ENCODE measurements at regions of chr17 and their contacts with region 1.

Region 1: GRCh38 chr17:77164483-77165091 is 23.8 kb downstream of the SEC14L1 start:
- DNase-seq: no peak
- H3K4me3 ChIP-seq: no peak overlapping the region
- H3K4me3 Mint-ChIP-seq: no peak overlapping the region
- H3K27ac Mint-ChIP-seq: no peak overlapping the region
- H3K4me1 ChIP-seq: peaks cover 22% of the 10 kb centered on the region
- H3K4me1 Mint-ChIP-seq: peaks cover 39% of the 10 kb centered on the region
- H3K27me3 ChIP-seq: no peaks in the 10 kb centered on the region
- H3K27me3 Mint-ChIP-seq: no peaks in the 10 kb centered on the region
- CTCF ChIP-seq: no peak

Region 2: GRCh38 chr17:77096570-77097214 is 67.9 kb before region 1 on chr17:
- CTCF ChIA-PET with region 1: no interaction called
- POLR2A ChIA-PET with region 1: no interaction called
- intact Hi-C with region 1: loop called (anchors 5 kb)
- DNase-seq: no peak
- H3K4me3 ChIP-seq: no peak overlapping the region
- H3K4me3 Mint-ChIP-seq: no peak overlapping the region
- H3K27ac Mint-ChIP-seq: peak overlapping the region; percentile 25
- H3K4me1 ChIP-seq: peaks cover 7% of the 10 kb centered on the region
- H3K4me1 Mint-ChIP-seq: peaks cover 17% of the 10 kb centered on the region
- H3K27me3 ChIP-seq: no peaks in the 10 kb centered on the region
- H3K27me3 Mint-ChIP-seq: no peaks in the 10 kb centered on the region
- CTCF ChIP-seq: peak; percentile 60 to 87

Region 3: DNA sequence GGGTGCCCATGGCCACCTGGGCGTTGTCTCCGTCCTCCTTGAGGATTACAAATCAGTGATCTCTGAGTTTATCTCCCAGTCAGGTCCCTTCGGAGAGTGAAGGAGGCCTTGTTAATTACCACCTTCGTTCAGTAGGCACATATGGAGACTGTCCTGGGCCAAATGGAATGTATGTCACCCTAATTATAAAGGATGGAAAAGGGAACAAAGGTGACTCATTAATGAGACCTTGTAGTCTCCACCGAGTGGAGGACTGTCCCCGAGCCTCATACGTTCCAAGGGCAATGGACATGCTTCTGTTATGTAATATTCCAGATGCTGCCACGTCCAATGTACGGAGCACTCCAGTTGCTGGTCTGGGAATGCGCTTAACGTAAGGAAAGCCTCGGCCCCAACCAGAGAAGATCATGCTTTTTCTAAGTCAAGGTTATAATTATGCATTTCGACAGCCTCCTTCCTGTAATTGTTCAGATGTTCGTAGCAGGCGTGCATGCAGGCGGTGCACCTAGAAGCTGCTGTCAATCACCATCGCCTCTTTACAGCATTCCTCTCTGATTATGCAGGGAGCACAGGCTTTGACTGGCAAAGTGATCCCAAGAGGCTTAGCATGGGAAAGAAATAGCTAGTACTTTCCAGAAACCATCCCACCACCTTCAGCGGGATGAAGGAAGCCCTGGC is 46.2 kb before region 1 on chr17:
- CTCF ChIA-PET with region 1: interaction called, 4 read pairs
- POLR2A ChIA-PET with region 1: no interaction called
- intact Hi-C with region 1: loop called (anchors 1 kb)
- DNase-seq: no peak
- H3K4me3 ChIP-seq: no peak overlapping the region
- H3K4me3 Mint-ChIP-seq: no peak overlapping the region
- H3K27ac Mint-ChIP-seq: peak overlapping the region; percentile 87
- H3K4me1 ChIP-seq: peaks cover 65% of the 10 kb centered on the region
- H3K4me1 Mint-ChIP-seq: peaks cover 41% of the 10 kb centered on the region
- H3K27me3 ChIP-seq: no peaks in the 10 kb centered on the region
- H3K27me3 Mint-ChIP-seq: no peaks in the 10 kb centered on the region
- CTCF ChIP-seq: no peak

Region 4: GRCh38 chr17:77140166-77140878 is 24.3 kb before region 1 on chr17:
- CTCF ChIA-PET with region 1: interaction called, 3 read pairs
- POLR2A ChIA-PET with region 1: interaction called, 3 read pairs
- intact Hi-C with region 1: loop called (anchors 2 kb)
- DNase-seq: peak; percentile 99
- H3K4me3 ChIP-seq: peak overlapping the region; percentile 77
- H3K4me3 Mint-ChIP-seq: peak overlapping the region; percentile 73
- H3K27ac Mint-ChIP-seq: peak overlapping the region; percentile 67
- H3K4me1 ChIP-seq: peaks cover 14% of the 10 kb centered on the region
- H3K4me1 Mint-ChIP-seq: peaks cover 18% of the 10 kb centered on the region
- H3K27me3 ChIP-seq: no peaks in the 10 kb centered on the region
- H3K27me3 Mint-ChIP-seq: no peaks in the 10 kb centered on the region
- CTCF ChIP-seq: no peak

Region 5: GRCh38 chr17:77145612-77146245 is 18.9 kb before region 1 on chr17:
- CTCF ChIA-PET with region 1: interaction called, 3 read pairs
- POLR2A ChIA-PET with region 1: interaction called, 3 read pairs
- intact Hi-C with region 1: loop called (anchors 1 kb)
- DNase-seq: peak; percentile 57 to 73
- H3K4me3 ChIP-seq: no peak overlapping the region
- H3K4me3 Mint-ChIP-seq: peak overlapping the region; percentile 19
- H3K27ac Mint-ChIP-seq: peak overlapping the region; percentile 93
- H3K4me1 ChIP-seq: peaks cover 44% of the 10 kb centered on the region
- H3K4me1 Mint-ChIP-seq: peaks cover 55% of the 10 kb centered on the region
- H3K27me3 ChIP-seq: no peaks in the 10 kb centered on the region
- H3K27me3 Mint-ChIP-seq: no peaks in the 10 kb centered on the region
- CTCF ChIP-seq: no peak

Region 6: DNA sequence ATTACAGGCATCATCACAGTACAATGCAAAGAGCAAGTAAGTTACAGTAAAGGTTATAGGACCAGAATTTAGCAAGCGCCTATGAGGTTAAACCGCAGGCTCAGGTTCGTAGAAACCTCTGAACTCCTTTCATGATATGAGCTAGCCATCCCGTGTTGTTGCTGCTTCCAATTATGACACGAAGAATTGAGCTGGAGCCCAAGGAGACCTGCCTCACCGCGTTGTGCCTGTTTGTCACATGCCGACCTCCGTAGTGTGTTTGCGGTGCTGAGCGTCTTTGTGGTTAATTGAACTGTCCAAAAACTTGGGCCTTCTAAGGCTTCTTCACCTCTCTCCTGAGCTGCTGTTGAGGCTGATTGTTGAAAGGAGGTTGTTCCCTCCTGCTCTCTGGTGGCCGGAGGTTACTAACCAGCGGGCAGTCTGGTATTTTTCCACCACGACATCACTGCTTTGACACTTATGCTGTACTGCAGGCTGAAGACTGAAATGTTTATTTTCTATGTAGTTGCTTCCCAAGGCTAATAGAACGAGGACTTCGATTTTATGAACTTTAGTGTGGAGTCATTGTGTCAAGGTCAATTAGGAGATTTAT is 43.7 kb after region 1 on chr17:
- CTCF ChIA-PET with region 1: interaction called, 15 read pairs
- POLR2A ChIA-PET with region 1: no interaction called
- intact Hi-C with region 1: loop called (anchors 5 kb)
- DNase-seq: peak; percentile 58 to 69
- H3K4me3 ChIP-seq: no peak overlapping the region
- H3K4me3 Mint-ChIP-seq: peak overlapping the region; percentile 52
- H3K27ac Mint-ChIP-seq: peak overlapping the region; percentile 84
- H3K4me1 ChIP-seq: peaks cover 13% of the 10 kb centered on the region
- H3K4me1 Mint-ChIP-seq: peaks cover 8% of the 10 kb centered on the region
- H3K27me3 ChIP-seq: no peaks in the 10 kb centered on the region
- H3K27me3 Mint-ChIP-seq: no peaks in the 10 kb centered on the region
- CTCF ChIP-seq: peak in 1 of 2 experiments; percentile 60